ENCODE measurements at regions of chr5 and their contacts with region 1.

Region 1: GRCh38 chr5:111550279-111551020 is 38.1 kb upstream of the STARD4 start:
- DNase-seq: peak; percentile 35 to 79 (median 68)
- ATAC-seq: peak; percentile 93
- H3K4me3 ChIP-seq: no peak overlapping the region
- H3K4me3 Mint-ChIP-seq: peak overlapping the region in 1 of 10 donors; percentile 19
- H3K27ac ChIP-seq: no peak overlapping the region
- H3K27ac Mint-ChIP-seq: peak overlapping the region in 2 of 9 donors; percentile 36 to 47
- H3K4me1 ChIP-seq: peaks cover 0 to 12% of the 10 kb centered on the region in 2 donors
- H3K4me1 Mint-ChIP-seq: peaks cover 8 to 22% (median 20%) of the 10 kb centered on the region in 7 donors
- H3K27me3 ChIP-seq: no peaks in the 10 kb centered on the region
- H3K27me3 Mint-ChIP-seq: peaks cover 0 to 4% (median 2%) of the 10 kb centered on the region in 5 donors

Region 2: DNA sequence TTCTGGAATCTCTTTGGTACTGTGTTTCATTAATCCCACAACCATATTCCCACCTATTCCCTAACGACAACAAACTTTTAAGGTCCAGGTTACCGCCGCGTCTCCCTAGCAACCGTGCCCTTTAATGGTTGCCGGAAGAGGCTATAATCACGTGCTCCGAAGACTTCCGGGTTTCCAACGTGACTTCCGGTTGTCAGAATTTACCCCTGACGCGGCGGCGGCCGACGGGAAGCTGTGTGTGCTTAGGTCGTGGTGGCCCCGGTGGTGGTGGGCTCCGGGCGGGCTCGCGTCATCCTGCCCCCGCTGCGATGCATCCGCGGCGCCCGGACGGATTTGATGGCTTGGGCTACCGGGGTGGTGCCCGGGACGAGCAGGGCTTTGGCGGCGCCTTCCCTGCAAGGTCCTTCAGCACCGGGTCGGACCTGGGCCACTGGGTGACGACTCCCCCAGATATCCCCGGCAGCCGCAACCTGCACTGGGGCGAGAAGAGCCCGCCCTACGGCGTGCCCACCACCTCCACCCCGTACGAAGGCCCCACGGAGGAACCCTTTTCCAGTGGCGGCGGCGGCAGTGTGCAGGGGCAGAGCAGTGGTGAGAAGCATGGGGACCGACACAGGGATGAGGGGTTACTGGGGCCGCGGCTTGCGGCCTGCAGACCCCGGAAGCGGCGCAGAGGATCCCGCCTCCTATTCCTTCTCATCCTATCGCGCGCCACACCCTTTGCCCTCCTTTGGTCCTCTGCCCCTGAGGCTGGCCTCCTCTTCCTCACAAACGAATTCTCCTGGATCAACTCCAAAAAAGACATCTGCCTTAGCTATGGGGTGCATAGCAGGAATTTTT is 811.4 kb before region 1 on chr5 and contains the start of gene SLC25A46:
- CTCF ChIA-PET with region 1: no interaction called
- POLR2A ChIA-PET with region 1: no interaction called
- intact Hi-C with region 1: no loop called
- DNase-seq: peak; percentile 75 to 92 (median 91)
- ATAC-seq: peak; percentile 92
- H3K4me3 ChIP-seq: peak within 1 kb of the TSS; percentile 96
- H3K4me3 Mint-ChIP-seq: peak within 1 kb of the TSS; percentile 90 to 100 (median 96)
- H3K27ac ChIP-seq: peak within 1 kb of the TSS; percentile 86
- H3K27ac Mint-ChIP-seq: peak within 1 kb of the TSS; percentile 91 to 100 (median 96)
- H3K4me1 ChIP-seq: peaks cover 4 to 15% of the 10 kb centered on the region in 2 donors
- H3K4me1 Mint-ChIP-seq: peaks cover 14 to 45% (median 34%) of the 10 kb centered on the region in 7 donors
- H3K27me3 ChIP-seq: no peaks in the 10 kb centered on the region
- H3K27me3 Mint-ChIP-seq: peaks cover 4 to 19% (median 6%) of the 10 kb centered on the region in 5 donors
- total RNA-seq, gene SLC25A46: 23.8 to 50.5 (median 35.9) TPM

Region 3: DNA sequence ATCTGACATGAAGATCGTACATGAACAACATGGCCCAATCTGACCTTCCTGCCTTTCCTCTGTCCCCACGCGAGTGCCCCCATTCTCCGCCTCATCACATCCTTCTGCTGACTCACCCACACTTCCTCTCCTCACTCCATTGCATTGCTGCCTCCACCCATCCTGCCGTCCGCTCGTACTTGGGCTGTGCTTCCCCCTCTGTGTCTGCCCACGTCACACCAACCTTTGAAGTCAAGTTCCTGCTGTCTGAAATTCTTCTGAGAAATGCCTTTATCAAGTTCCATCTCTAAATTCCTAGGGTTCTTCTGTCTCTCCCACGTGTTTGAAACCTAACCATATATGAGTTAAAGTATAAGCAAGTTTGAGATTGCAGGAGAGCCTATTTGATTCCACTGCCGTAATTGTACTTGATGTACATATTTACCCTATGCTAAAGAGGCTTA is 20.1 kb before region 1 on chr5:
- CTCF ChIA-PET with region 1: interaction called, 4 read pairs
- POLR2A ChIA-PET with region 1: no interaction called
- intact Hi-C with region 1: loop called in 1 of 2 experiments (anchors 1 kb)
- DNase-seq: peak; percentile 51 to 94 (median 78)
- ATAC-seq: peak; percentile 100
- H3K4me3 ChIP-seq: peak overlapping the region; percentile 6
- H3K4me3 Mint-ChIP-seq: peak overlapping the region; percentile 1 to 78 (median 66)
- H3K27ac ChIP-seq: peak overlapping the region; percentile 34
- H3K27ac Mint-ChIP-seq: peak overlapping the region; percentile 6 to 90 (median 76)
- H3K4me1 ChIP-seq: peaks cover 9 to 13% of the 10 kb centered on the region in 2 donors
- H3K4me1 Mint-ChIP-seq: peaks cover 10 to 28% (median 14%) of the 10 kb centered on the region in 7 donors
- H3K27me3 ChIP-seq: no peaks in the 10 kb centered on the region
- H3K27me3 Mint-ChIP-seq: peaks cover 0 to 3% (median 0%) of the 10 kb centered on the region in 5 donors

Region 4: DNA sequence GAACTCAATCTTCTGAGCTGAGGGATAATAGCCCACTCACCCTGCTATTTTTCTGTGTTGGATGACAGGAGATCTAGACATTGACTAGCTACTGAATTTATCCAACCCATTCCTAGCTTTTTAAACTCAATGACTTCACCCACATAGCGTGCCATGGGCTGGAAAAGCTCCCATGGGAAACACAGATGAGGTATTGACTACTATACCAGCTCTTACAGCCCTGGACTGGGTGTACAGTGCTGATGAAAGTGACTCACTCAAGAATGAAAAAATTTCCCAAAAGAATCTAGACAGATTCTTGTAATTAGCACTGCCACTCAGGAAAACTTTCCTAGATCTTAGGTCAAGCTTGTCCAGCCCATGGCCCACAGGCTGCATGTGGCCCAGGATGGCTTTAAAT is 279.3 kb after region 1 on chr5:
- CTCF ChIA-PET with region 1: no interaction called
- POLR2A ChIA-PET with region 1: no interaction called
- intact Hi-C with region 1: loop called in 1 of 2 experiments (anchors 10 kb)
- DNase-seq: no peak
- ATAC-seq: no peak
- H3K4me3 ChIP-seq: no peak overlapping the region
- H3K4me3 Mint-ChIP-seq: no peak overlapping the region
- H3K27ac ChIP-seq: no peak overlapping the region
- H3K27ac Mint-ChIP-seq: no peak overlapping the region
- H3K4me1 ChIP-seq: no peaks in the 10 kb centered on the region
- H3K4me1 Mint-ChIP-seq: no peaks in the 10 kb centered on the region
- H3K27me3 ChIP-seq: no peaks in the 10 kb centered on the region
- H3K27me3 Mint-ChIP-seq: peaks cover 0 to 4% (median 0%) of the 10 kb centered on the region in 5 donors

Region 5: DNA sequence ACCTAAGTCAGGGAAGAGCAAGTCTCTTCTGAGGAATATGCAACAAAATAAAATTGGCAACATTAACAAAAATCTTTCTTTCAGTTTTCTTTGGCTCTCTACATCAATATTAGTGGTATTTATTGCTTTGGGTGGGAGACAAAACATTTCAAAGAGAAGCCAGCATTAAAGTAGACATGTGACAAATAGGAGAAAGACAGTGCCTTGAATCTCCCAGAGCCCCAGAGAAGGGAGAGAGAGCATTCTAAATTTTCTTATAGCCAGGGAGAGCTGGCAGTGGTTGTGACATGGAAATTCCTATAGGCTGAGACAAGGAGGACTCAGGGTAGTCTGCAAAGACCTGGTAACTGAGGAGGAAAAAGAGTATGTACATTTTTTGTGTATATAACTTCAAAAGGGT is 286.0 kb after region 1 on chr5:
- CTCF ChIA-PET with region 1: no interaction called
- POLR2A ChIA-PET with region 1: no interaction called
- intact Hi-C with region 1: loop called in 1 of 2 experiments (anchors 1 kb)
- DNase-seq: no peak
- ATAC-seq: no peak
- H3K4me3 ChIP-seq: no peak overlapping the region
- H3K4me3 Mint-ChIP-seq: no peak overlapping the region
- H3K27ac ChIP-seq: no peak overlapping the region
- H3K27ac Mint-ChIP-seq: no peak overlapping the region
- H3K4me1 ChIP-seq: no peaks in the 10 kb centered on the region
- H3K4me1 Mint-ChIP-seq: no peaks in the 10 kb centered on the region
- H3K27me3 ChIP-seq: no peaks in the 10 kb centered on the region
- H3K27me3 Mint-ChIP-seq: peaks cover 0 to 21% (median 7%) of the 10 kb centered on the region in 5 donors